ENCODE measurements at regions of chr1 and their contacts with region 1.

Region 1: DNA sequence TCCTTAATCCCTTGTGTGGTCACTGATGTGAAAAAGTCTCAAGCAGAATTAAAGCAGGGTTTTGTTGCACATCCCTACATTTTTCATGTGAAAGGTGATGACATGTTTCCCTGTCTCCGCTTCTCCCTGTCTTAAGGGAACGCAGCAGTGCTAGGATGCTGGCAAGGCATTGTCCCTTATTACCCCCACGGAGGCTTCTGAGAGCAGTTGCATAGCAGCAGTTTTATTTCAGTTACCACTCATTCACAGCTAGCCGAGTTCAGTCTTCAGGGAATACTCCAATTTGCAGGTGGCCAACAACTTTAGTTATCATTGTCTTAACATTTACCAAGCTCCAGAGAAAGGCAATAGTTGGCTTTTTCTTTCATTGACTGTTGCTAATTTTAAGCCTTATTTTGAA is 89.1 kb downstream of the CLEC20A start:
- DNase-seq: no peak
- ATAC-seq: no peak
- H3K4me3 ChIP-seq: no peak overlapping the region
- H3K27ac ChIP-seq: no peak overlapping the region
- H3K4me1 ChIP-seq: no peaks in the 10 kb centered on the region
- H3K27me3 ChIP-seq: no peaks in the 10 kb centered on the region
- CTCF ChIP-seq: no peak

Region 2: GRCh38 chr1:178371235-178371634 is 36.4 kb before region 1 on chr1:
- intact Hi-C with region 1: loop called in 1 of 2 experiments (anchors 5 kb)
- DNase-seq: no peak
- ATAC-seq: peak in 3 of 4 donors; percentile 43 to 75 (median 56)
- H3K4me3 ChIP-seq: peak overlapping the region; percentile 62
- H3K27ac ChIP-seq: no peak overlapping the region
- H3K4me1 ChIP-seq: peaks cover 25% of the 10 kb centered on the region
- H3K27me3 ChIP-seq: no peaks in the 10 kb centered on the region
- CTCF ChIP-seq: no peak